Posterior vena cava (tissue), 2 donors: ENCODE measurements at regions of chr2 and their contacts with region 1.

Region 1: DNA sequence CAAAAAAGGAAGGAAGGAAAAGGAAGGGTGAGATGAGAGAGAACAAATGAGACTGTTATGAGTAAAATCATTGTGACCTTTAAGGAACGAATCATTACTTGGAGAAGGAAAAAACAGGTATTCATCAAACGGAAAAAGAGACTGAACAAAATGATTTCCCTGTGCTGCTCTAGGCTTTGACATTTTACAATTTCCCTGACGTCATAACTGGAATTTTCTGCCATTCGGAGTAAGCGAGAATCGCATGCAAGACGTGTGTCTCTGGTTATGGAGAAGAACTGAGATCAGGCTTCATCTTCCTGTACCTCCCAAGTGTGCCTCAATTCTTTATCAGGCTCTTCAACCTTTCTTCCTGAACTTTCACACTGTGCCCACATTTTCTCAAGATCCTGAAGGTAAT is 534.7 kb upstream of the KLHL29 start:
- DNase-seq: no peak

Region 2: GRCh38 chr2:22901471-22902179 is 51.3 kb after region 1 on chr2:
- intact Hi-C with region 1: loop called in 1 of 2 experiments (anchors 2 kb)
- DNase-seq: no peak

Region 3: GRCh38 chr2:22970284-22970975 is 120.1 kb after region 1 on chr2:
- intact Hi-C with region 1: no loop called
- DNase-seq: no peak